ENCODE measurements at regions of chr4 and their contacts with region 1.

Region 1: GRCh38 chr4:83255584-83255983 is 29.0 kb downstream of the COQ2 start:
- DNase-seq: peak; percentile 89
- ATAC-seq: peak; percentile 39
- H3K4me3 ChIP-seq: no peak overlapping the region
- H3K27ac ChIP-seq: peak overlapping the region; percentile 72; the same call in 1 of the 2 replicates
- H3K4me1 ChIP-seq: peaks cover 26% of the 10 kb centered on the region
- H3K27me3 ChIP-seq: no peaks in the 10 kb centered on the region
- CTCF ChIP-seq: no peak

Region 2: DNA sequence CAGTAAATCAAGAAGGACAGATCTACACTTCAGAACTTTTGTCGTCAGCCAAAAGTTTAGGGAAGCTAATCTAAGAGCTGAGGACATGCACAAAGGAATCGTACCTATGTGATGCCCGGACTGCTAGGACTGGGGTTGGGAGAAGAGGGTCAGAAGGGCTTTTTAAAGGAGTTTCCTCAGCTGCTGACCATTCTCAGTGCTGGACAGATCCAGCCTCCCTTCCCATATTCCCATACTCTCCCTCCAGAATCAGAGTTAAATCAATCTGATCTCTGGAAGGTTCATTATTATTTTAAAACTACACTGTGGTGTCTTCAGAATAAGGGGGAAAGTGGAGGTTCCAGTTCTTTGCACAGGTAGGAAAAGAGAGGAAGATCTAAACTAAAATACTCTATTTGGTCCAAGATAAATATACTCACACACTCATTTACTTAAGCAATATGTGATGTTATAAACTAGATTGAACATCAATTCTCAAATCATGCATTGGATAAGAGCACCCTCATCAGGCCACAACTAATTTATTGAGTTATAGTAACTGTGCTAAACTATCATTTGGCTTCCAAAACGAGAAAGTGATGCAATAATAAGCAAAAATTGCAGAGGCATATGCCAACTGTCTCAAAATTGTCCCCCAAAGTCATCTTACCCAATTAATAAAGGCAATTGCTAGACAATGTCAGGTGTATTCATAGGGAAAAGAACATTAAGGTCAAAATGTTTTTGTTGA is 1006.5 kb before region 1 on chr4:
- CTCF ChIA-PET with region 1: no interaction called
- POLR2A ChIA-PET with region 1: no interaction called
- intact Hi-C with region 1: no loop called
- DNase-seq: no peak
- ATAC-seq: no peak
- H3K4me3 ChIP-seq: no peak overlapping the region
- H3K27ac ChIP-seq: no peak overlapping the region
- H3K4me1 ChIP-seq: no peaks in the 10 kb centered on the region
- H3K27me3 ChIP-seq: peaks cover 8% of the 10 kb centered on the region; the same call in 1 of the 2 replicates
- CTCF ChIP-seq: 0 out of 2 replicates have a peak, but pooled peaks have one; percentile 12

Region 3: GRCh38 chr4:82930848-82931755 is 324.5 kb before region 1 on chr4:
- CTCF ChIA-PET with region 1: no interaction called
- POLR2A ChIA-PET with region 1: no interaction called
- intact Hi-C with region 1: no loop called
- DNase-seq: no peak
- ATAC-seq: no peak
- H3K4me3 ChIP-seq: no peak overlapping the region
- H3K27ac ChIP-seq: no peak overlapping the region
- H3K4me1 ChIP-seq: no peaks in the 10 kb centered on the region
- H3K27me3 ChIP-seq: no peaks in the 10 kb centered on the region
- CTCF ChIP-seq: no peak

Region 4: DNA sequence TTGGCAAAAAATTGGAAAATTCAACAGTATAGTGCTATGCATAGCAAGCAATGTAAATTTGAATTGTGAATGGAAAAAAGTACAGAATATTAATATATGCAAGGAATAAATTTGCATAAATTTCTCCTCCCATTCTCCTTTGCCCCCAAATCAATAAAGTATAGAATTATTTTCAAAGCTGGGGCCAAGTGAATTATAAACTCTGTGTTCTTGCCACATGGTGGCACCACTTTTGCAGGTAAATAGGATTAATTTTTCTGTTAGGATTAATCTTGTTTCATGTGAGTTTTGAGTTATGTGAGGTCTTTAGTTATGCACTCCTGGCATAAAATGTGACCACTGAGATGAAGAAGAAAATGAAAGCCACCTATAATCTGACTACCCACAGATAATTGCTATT is 200.7 kb before region 1 on chr4:
- CTCF ChIA-PET with region 1: no interaction called
- POLR2A ChIA-PET with region 1: no interaction called
- intact Hi-C with region 1: loop called (anchors 1 kb)
- DNase-seq: peak; percentile 44
- ATAC-seq: peak; percentile 37; the same call in 1 of the 2 replicates
- H3K4me3 ChIP-seq: no peak overlapping the region
- H3K27ac ChIP-seq: no peak overlapping the region
- H3K4me1 ChIP-seq: no peaks in the 10 kb centered on the region
- H3K27me3 ChIP-seq: no peaks in the 10 kb centered on the region
- CTCF ChIP-seq: peak; percentile 64

Region 5: DNA sequence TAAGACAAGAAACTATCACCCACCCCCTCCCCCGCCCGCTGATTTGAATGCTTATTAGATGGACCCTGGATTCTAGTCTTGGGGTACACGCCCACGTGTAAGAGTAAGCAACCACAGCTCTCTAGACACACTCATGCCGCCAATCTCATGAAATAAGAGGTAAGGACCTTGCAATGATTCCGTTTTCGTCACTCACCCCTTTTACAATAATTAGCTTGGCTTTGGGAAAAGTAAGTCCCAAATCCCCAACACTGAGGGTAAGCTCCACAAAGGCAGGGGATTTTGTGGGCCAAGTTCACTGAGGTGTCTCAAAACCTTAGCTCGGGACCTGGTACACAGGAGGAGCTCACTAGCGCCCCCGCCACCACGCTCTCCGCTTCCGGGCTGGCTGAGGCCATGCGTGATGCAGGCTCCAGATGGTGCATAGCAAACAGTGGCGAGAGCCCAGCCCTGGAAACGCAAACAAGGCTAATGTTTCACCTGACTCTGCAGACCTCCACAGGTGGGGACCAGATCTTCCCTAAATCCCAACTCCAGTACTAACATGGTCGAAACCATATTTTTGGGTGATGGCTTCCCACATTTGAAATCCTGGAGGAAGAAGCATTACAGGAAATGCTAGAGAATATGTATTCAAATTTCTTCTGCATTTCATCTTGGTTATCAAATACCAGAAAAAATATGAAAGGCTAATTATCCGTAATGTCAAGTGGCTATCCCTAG is 145.2 kb before region 1 on chr4:
- CTCF ChIA-PET with region 1: no interaction called
- POLR2A ChIA-PET with region 1: no interaction called
- intact Hi-C with region 1: loop called (anchors 1 kb)
- DNase-seq: peak; percentile 86
- ATAC-seq: peak; percentile 87
- H3K4me3 ChIP-seq: peak overlapping the region; percentile 77
- H3K27ac ChIP-seq: peak overlapping the region; percentile 30; the same call in 1 of the 2 replicates
- H3K4me1 ChIP-seq: peaks cover 20% of the 10 kb centered on the region
- H3K27me3 ChIP-seq: no peaks in the 10 kb centered on the region
- CTCF ChIP-seq: peak; percentile 77

Region 6: GRCh38 chr4:83207497-83208105 is 48.0 kb before region 1 on chr4:
- CTCF ChIA-PET with region 1: no interaction called
- POLR2A ChIA-PET with region 1: no interaction called
- intact Hi-C with region 1: loop called (anchors 1 kb)
- DNase-seq: peak; percentile 75
- ATAC-seq: peak; percentile 97
- H3K4me3 ChIP-seq: no peak overlapping the region
- H3K27ac ChIP-seq: no peak overlapping the region
- H3K4me1 ChIP-seq: peaks cover 13% of the 10 kb centered on the region
- H3K27me3 ChIP-seq: no peaks in the 10 kb centered on the region
- CTCF ChIP-seq: no peak